Naive thymus-derived CD4-positive, alpha-beta T cell (primary cell): ENCODE measurements at regions of chr11 and their contacts with region 1.

Region 1: DNA sequence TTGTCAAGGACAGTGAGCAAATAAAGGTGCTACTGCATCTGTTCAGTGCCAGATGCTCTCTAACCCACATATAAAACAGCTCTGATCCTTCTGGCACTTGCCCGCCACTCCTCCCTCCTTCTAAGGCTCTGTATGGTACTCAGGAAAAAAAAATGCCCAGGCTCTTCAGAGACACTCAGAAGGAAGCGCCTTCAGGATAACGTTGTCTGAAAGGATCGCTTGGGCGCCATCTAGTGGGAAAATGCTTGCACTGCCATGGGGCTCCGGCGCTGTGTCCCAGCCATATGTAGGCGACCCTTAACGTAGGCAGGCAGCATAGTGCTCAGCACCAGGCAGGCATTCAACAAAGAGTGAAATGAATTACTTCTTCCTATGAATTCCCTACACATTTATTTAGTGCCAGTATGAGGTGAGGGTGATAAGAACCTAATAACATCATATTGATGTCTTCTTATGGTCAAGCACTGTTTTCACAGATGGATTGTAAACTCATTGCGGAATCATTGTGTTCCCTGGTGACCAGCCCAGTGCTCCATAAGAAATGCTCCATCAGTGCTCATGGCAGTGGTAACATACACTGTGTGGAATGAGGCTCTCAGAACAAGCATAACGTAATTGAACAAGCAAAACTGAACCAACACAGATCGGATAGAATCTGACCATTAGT is 39.6 kb downstream of the PAMR1 start:
- DNase-seq: peak; percentile 35 to 71 (median 52)
- ATAC-seq: peak; percentile 84
- H3K4me3 ChIP-seq: no peak overlapping the region
- H3K4me3 Mint-ChIP-seq: no peak overlapping the region
- H3K27ac ChIP-seq: no peak overlapping the region
- H3K27ac Mint-ChIP-seq: no peak overlapping the region
- H3K4me1 ChIP-seq: no peaks in the 10 kb centered on the region
- H3K4me1 Mint-ChIP-seq: peaks cover 0 to 3% (median 0%) of the 10 kb centered on the region in 7 donors
- H3K27me3 ChIP-seq: no peaks in the 10 kb centered on the region
- H3K27me3 Mint-ChIP-seq: peaks cover 30 to 52% (median 48%) of the 10 kb centered on the region in 5 donors

Region 2: DNA sequence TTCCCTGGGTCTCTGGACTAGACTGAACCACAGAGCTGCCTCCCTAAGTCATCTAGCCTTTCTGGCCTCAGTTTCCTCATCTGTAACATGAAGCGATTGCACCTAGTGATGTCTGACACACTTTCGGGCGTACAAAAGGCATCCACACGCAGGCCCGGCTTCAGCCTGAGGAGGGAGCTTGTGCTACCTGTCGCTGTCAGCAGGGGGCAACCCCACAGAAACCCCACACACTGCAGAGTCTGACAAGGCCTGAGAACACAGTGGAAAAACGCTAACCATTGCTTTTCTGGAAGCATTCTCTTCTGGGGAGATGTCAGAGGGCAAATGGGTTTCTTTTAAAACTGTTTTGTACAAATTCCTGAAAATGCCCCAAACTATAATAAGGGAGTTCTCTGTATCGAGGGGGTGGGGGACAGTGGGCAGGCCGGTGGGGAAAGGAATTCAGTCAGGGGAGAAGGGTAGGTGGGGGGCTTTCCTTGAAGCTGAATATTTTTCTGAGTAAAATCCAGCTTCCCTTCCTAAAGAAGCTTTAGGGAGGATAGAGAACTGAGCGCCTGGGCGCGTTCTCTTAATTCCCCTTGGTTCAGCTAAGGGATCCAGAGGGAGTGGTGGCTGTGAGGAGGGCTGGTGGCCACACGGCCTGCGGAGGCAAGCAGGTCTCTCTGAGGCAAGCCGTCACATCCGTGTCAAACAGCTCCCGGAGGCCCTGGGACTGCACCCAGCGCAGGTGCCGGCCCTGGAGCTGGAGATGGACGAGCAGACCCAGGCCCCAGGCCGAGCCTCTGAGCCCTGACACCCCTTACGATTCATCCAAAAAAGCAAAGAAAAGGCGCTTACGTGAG is 972.7 kb before region 1 on chr11:
- CTCF ChIA-PET with region 1: interaction called, 3 read pairs
- POLR2A ChIA-PET with region 1: no interaction called
- intact Hi-C with region 1: loop called in 1 of 2 experiments (anchors 10 kb)
- DNase-seq: peak in 8 of 9 donors; percentile 3 to 37 (median 25)
- ATAC-seq: peak; percentile 82
- H3K4me3 ChIP-seq: no peak overlapping the region
- H3K4me3 Mint-ChIP-seq: no peak overlapping the region
- H3K27ac ChIP-seq: no peak overlapping the region
- H3K27ac Mint-ChIP-seq: no peak overlapping the region
- H3K4me1 ChIP-seq: no peaks in the 10 kb centered on the region
- H3K4me1 Mint-ChIP-seq: peaks cover 0 to 2% (median 0%) of the 10 kb centered on the region in 7 donors
- H3K27me3 ChIP-seq: no peaks in the 10 kb centered on the region
- H3K27me3 Mint-ChIP-seq: peaks cover 0 to 13% (median 0%) of the 10 kb centered on the region in 5 donors

Region 3: DNA sequence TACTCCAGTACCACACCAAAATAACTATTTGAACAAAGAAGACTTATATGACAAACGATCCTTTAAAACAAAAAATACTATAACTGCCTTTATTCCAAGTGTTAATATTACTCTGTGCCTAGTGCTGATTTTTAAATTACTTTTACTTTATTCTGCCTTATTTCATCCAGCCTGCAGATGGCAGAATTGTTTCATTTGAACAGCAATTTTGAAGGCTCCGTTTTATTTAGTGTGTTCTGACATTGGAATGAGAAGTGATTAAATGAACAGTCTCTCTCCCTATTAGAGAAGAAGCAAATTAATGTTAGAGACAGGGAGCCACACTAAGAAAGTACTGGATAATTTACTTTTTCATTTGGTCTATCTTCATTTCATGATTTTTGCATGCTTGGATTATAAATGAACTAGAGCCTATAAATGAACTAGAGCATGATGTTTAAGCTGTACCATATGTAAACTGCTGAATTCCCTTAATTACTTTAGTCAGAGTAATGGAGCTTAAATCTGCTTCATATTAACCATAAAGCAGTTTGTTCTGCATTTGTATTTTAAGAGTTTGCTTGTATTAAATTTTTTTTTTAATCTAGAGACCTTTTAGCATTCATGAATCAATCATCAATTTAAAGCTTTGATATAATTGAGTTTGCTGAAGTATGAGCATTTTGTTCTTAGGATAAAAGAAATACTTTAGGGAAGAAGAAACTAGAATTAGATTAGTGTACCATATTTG is 559.5 kb before region 1 on chr11:
- CTCF ChIA-PET with region 1: interaction called, 24 read pairs
- POLR2A ChIA-PET with region 1: no interaction called
- intact Hi-C with region 1: loop called (anchors 1 kb)
- DNase-seq: peak in 7 of 9 donors; percentile 18 to 61 (median 58)
- ATAC-seq: peak; percentile 80
- H3K4me3 ChIP-seq: no peak overlapping the region
- H3K4me3 Mint-ChIP-seq: no peak overlapping the region
- H3K27ac ChIP-seq: no peak overlapping the region
- H3K27ac Mint-ChIP-seq: peak overlapping the region in 1 of 9 donors; percentile 49
- H3K4me1 ChIP-seq: peaks cover 0 to 10% of the 10 kb centered on the region in 2 donors
- H3K4me1 Mint-ChIP-seq: peaks cover 10 to 54% (median 29%) of the 10 kb centered on the region in 7 donors
- H3K27me3 ChIP-seq: no peaks in the 10 kb centered on the region
- H3K27me3 Mint-ChIP-seq: no peaks in the 10 kb centered on the region

Region 4: GRCh38 chr11:34997952-34998528 is 487.7 kb before region 1 on chr11:
- CTCF ChIA-PET with region 1: no interaction called
- POLR2A ChIA-PET with region 1: no interaction called
- intact Hi-C with region 1: loop called in 1 of 2 experiments (anchors 1 kb)
- DNase-seq: peak in 6 of 9 donors; percentile 27 to 54 (median 44)
- ATAC-seq: peak; percentile 72
- H3K4me3 ChIP-seq: no peak overlapping the region
- H3K4me3 Mint-ChIP-seq: peak overlapping the region in 9 of 10 donors; percentile 6 to 81 (median 34)
- H3K27ac ChIP-seq: peak overlapping the region; percentile 8
- H3K27ac Mint-ChIP-seq: peak overlapping the region; percentile 15 to 90 (median 69)
- H3K4me1 ChIP-seq: peaks cover 15 to 19% of the 10 kb centered on the region in 2 donors
- H3K4me1 Mint-ChIP-seq: peaks cover 19 to 38% (median 35%) of the 10 kb centered on the region in 7 donors
- H3K27me3 ChIP-seq: no peaks in the 10 kb centered on the region
- H3K27me3 Mint-ChIP-seq: no peaks in the 10 kb centered on the region

Region 5: GRCh38 chr11:35436581-35437250 is 49.1 kb before region 1 on chr11:
- CTCF ChIA-PET with region 1: no interaction called
- POLR2A ChIA-PET with region 1: no interaction called
- intact Hi-C with region 1: no loop called
- DNase-seq: no peak
- ATAC-seq: no peak
- H3K4me3 ChIP-seq: no peak overlapping the region
- H3K4me3 Mint-ChIP-seq: no peak overlapping the region
- H3K27ac ChIP-seq: no peak overlapping the region
- H3K27ac Mint-ChIP-seq: no peak overlapping the region
- H3K4me1 ChIP-seq: no peaks in the 10 kb centered on the region
- H3K4me1 Mint-ChIP-seq: no peaks in the 10 kb centered on the region
- H3K27me3 ChIP-seq: no peaks in the 10 kb centered on the region
- H3K27me3 Mint-ChIP-seq: peaks cover 17 to 49% (median 40%) of the 10 kb centered on the region in 5 donors

Region 6: DNA sequence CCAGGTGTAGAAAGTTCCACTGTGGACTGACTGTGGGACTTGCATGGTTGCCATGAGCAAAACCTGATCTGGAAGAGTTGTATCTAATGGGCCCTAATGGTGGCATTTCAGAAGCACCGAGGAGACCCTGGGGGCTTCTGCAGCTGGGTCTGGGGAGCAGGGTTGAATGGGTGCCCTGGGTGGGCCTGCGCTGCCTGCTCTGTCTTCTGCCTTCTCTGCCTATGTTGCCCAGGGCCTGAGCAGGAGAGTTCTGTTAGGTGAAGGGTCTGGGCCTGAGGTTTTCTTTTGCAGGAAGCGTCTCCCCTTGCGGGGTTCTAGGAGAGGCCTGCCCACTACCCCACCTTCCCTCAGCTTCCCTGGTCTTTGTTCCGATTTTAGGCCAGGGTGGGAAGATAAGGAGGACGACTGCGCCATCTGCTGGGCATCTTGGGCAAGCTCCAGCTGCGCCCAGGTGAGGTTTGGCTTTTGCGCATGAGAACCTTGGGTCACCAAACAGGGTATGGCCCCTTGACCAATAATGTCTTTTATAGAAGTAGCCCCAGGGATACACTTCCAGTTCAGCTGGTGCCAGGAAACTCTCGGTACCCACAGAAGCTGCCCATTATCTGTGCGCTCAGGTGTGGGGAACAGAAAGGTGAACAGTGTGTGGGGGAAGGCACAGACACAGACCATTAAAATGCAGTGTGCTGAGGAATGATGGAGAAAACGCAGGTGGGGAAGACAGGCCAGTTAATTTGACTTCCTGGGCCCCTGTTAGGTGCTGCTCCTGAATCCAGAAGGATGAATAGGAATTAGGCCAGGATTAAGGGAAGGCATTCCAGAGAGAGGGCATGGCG is 780.2 kb after region 1 on chr11:
- CTCF ChIA-PET with region 1: interaction called, 4 read pairs
- POLR2A ChIA-PET with region 1: no interaction called
- intact Hi-C with region 1: loop called in 1 of 2 experiments (anchors 5 kb)
- DNase-seq: peak; percentile 14 to 58 (median 35)
- ATAC-seq: peak; percentile 68
- H3K4me3 ChIP-seq: no peak overlapping the region
- H3K4me3 Mint-ChIP-seq: no peak overlapping the region
- H3K27ac ChIP-seq: no peak overlapping the region
- H3K27ac Mint-ChIP-seq: no peak overlapping the region
- H3K4me1 ChIP-seq: no peaks in the 10 kb centered on the region
- H3K4me1 Mint-ChIP-seq: no peaks in the 10 kb centered on the region
- H3K27me3 ChIP-seq: no peaks in the 10 kb centered on the region
- H3K27me3 Mint-ChIP-seq: peaks cover 0 to 20% (median 13%) of the 10 kb centered on the region in 5 donors